G401 (cell line): ENCODE measurements at regions of chr11 and their contacts with region 1.

Region 1: GRCh38 chr11:9672288-9672916 is 8.5 kb downstream of the SWAP70 start:
- DNase-seq: no peak

Region 2: DNA sequence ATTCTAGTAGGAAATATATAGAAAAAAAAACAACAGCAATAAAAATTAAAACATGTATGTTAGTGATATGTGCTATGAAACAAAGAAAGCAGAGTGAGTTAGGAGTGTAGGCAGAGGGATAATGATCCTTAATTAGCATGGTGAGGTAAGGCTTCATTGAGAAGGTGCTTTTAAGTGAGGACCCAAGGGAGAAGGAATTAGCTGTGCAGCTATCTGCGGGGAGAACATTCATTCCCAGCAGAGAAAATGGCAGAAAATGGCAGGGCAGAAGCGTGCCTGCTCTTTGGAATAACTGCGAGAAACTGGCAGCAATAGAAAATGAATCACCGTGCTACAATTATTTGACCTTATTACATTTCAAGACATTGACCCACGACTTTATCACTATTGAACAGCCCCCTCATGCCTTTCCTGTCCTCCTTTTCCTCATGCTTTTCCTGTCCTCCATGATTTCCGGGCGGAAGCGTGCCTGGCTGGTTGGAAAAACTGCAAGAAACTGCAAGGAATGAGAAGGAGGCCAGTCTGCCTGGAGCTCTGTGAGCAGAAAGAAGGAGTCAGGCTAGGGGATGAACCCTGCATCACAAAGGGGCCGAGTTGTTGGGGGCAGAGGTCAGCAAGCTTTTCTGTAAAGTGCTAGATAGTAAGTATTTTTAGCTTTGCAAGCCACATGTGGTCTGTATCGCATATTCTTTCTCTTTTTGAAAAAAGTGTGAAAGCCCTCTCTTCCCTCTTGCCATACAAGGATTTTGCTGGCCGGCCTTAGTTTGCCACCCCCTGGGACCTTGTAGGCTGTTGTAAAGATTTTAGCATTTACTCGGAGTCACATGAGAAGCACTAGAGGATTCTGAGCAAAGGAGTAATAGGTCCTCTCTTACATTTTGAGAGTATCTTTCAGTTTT is 45.7 kb before region 1 on chr11:
- in situ Hi-C with region 1: no loop called
- DNase-seq: no peak

Region 3: DNA sequence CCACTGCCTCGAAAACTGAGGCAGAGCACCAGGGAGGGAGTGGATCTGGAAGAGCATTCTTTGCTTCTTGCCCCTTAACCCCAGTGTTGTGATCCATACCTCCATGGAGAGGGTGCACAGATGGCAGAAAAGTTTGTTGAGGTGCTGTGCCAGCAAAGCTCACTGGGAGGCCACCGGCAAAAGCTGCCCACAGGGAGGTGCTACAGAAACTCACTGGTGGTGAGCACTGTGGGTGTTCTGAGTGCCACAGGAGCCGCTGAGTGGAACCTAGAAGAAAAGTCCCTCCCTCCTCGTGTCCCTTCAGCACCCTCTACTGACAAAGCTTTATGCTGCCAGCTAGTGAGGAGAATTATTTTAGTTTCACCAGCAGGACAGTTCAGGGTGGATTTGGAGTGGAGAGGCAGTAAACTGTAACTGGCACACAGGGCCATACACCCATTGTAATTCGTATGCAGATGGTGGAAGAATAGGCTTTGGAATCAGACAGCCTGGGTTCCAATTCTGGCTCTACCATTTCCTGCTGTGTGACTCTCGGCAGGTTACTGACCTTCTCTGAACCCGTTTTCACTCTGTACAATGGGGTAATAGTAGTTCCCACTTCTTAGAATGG is 76.1 kb after region 1 on chr11:
- in situ Hi-C with region 1: loop called (anchors 10 kb)
- DNase-seq: peak; percentile 47

Region 4: GRCh38 chr11:9758637-9759518 is 86.5 kb after region 1 on chr11:
- in situ Hi-C with region 1: no loop called
- DNase-seq: peak; percentile 56